ENCODE measurements at regions of chr1 and their contacts with region 1.

Region 1: DNA sequence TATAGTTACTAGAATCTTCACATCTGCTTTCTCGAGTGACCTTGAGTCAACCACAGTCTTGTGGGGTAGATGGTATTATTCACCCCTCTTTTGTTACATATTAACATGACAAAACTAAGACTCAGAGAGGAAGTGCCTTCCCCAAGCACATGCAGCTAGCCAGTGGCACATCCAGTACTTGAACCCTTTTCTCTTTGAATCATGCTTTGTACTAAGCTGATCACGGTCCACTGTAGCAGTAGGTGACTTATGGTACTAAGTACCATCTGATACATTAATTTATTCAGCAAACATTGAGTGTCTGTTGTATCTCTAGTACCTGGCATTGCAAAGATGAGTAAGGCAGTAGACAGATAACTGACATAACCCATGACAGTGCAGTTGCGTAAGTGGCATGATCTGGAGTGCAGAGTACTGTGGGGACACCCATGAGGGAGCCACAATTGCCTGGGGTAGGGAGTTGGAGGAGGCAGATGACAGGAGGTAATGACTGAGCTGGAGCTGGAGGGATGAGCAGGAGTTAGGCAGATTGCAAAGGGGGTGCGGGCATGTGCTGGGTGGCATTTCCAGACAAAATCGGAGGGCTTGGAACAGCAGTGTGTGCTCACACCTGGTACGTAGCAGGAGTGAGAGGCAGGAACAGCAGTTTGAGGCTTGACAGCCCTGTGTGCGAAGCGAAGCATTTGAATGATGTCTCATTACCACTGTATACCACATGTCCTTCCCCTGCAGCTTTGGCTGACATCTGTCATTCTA is 29.8 kb downstream of the UCK2 start:
- DNase-seq: no peak
- H3K4me3 Mint-ChIP-seq: no peak overlapping the region
- H3K27ac Mint-ChIP-seq: no peak overlapping the region
- H3K4me1 Mint-ChIP-seq: peaks cover 75% of the 10 kb centered on the region
- H3K27me3 Mint-ChIP-seq: no peaks in the 10 kb centered on the region

Region 2: GRCh38 chr1:165871311-165872067 is 14.3 kb after region 1 on chr1:
- intact Hi-C with region 1: loop called (anchors 2 kb)
- DNase-seq: peak; percentile 49
- H3K4me3 Mint-ChIP-seq: peak overlapping the region; percentile 55
- H3K27ac Mint-ChIP-seq: peak overlapping the region; percentile 63
- H3K4me1 Mint-ChIP-seq: peaks cover 54% of the 10 kb centered on the region
- H3K27me3 Mint-ChIP-seq: peaks cover 5% of the 10 kb centered on the region

Region 3: GRCh38 chr1:166616206-166616605 is 759.0 kb after region 1 on chr1:
- intact Hi-C with region 1: no loop called
- DNase-seq: no peak
- H3K4me3 Mint-ChIP-seq: no peak overlapping the region
- H3K27ac Mint-ChIP-seq: no peak overlapping the region
- H3K4me1 Mint-ChIP-seq: no peaks in the 10 kb centered on the region
- H3K27me3 Mint-ChIP-seq: peaks cover 3% of the 10 kb centered on the region